RWPE1 (cell line): ENCODE measurements at regions of chr11 and their contacts with region 1.

Region 1: GRCh38 chr11:10899121-10899830 is 41.4 kb upstream of the ZBED5 start:
- DNase-seq: peak; percentile 94
- H3K27ac ChIP-seq: peak overlapping the region; percentile 100
- CTCF ChIP-seq: no peak

Region 2: DNA sequence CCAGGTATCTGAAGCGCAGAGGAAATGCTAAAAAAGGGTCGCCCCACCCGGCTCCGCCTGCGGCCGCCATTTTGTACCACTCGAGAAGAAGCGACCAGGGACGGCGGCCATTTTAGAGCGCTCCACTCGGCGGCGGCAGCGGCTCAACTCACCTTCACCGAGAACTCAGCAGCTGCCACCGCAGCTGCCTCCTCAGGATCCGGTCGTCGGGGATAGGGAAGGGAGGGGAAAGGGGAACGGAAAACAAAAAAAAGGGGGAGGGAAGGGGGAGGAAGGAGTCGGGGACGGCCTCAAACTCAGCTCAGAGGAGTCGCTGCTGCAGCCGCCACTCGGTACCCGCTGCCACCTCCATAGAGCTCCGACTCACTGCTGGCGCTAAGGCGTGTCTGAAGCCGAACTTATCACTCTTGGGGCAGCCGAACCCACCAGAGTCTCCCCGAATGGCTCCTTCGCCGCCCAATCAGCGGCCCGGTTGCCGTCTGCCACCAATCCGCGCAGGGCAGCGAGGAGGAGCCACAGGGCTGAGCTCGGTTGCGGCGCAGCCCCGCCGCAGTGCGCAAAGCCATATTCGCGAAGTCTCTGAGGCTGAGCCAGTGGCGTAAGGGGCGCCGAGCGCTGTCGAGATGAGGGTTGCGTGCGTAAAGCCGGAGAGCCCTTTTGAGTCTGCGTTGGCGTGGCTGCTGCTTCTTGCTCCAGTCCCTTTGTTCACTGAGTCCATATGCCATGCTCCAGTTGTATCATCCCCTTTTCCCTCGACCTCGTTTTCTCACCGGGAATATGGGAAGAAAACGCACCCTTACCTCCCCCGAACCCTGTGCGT is 90.5 kb before region 1 on chr11 and contains the start of gene EIF4G2:
- CTCF ChIA-PET with region 1: no interaction called
- POLR2A ChIA-PET with region 1: interaction called, 11 read pairs
- DNase-seq: peak; percentile 99
- H3K27ac ChIP-seq: peak within 1 kb of the TSS; percentile 96
- CTCF ChIP-seq: no peak

Region 3: DNA sequence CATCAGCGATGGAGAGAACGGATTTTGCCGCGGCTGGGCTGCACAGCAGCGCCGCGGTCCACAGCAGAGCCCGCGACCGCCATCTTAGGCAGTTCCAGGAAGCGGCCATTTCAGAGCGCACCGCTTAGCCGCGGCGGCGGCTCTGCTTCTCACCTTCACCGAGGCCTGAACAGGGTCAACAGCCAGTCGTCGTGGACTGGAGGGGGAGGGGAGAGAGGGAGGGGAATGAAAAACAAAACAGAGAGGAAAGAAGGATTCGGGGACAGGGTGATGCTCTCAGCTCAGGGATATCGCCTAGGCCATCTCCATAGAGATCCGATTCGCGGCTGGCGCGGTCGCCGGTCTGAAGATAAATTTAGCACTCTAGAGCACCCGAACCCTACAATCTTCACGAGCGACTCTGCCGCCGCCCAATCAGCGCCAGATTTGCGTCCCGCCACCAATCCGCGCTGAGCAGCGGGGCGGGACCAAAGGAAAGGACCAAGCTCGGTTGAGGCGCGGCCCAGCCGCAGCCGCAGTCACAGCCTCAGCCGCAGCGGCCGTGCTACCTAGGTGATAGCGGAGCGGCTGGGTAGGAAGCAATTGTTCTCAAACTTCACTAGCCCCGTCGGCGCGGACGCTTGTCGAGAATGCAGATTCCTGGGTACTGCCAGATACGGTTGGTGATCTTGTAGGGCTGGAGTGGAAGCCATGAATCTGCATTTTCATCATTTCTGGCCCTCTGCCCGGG is 41.4 kb before region 1 on chr11 and contains the start of gene ZBED5:
- CTCF ChIA-PET with region 1: interaction called, 4 read pairs
- POLR2A ChIA-PET with region 1: interaction called, 10 read pairs
- DNase-seq: peak; percentile 96
- H3K27ac ChIP-seq: peak within 1 kb of the TSS; percentile 100
- CTCF ChIP-seq: no peak

Region 4: GRCh38 chr11:10878408-10879214 is 20.7 kb before region 1 on chr11:
- CTCF ChIA-PET with region 1: interaction called, 10 read pairs
- POLR2A ChIA-PET with region 1: no interaction called
- DNase-seq: no peak
- H3K27ac ChIP-seq: no peak overlapping the region
- CTCF ChIP-seq: peak; percentile 44